Activated CD8-positive, alpha-beta T cell treated with anti-CD3 and anti-CD28 coated beads for 36 hours (primary cell): ENCODE measurements at regions of chr14 and their contacts with region 1.

Region 1: DNA sequence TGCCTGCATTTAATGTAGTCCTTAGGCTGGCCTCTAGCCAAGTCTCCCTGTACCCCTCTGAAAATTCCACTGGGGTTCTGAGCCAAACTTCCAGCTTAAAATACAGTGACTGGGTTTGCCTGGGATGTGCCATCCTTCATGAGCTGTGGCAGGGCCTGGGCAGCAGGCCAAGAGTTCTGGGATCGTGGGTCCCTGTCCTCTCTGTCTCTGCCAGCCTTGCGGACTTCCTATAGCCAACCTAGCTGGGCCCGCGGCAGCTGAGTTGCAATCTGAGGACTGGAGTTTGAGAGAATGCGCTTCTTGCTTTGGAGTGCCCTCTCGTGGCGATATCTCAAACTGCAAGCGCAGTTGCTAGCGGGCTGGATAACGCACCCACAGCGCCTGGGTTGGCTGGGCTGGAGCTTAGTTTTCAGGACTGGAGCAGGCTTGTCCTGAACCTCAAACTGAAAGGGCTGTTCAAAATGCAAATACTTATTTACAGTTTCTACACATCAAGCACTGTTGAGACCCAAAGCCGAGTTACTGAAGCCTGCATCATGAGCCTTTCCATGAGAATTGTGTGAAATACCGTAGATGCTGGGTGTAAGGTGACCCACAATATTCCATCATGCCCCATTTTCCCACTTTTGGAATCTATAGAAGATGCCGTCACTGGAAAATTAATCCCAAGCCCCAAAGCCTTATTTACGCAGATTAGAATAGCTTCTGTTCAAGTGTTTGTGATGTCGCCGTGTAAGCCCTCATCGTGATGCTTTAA is 7.3 kb upstream of the IFI27L2 start:
- DNase-seq: peak; percentile 93
- ATAC-seq: peak; percentile 96
- H3K4me3 Mint-ChIP-seq: no peak overlapping the region
- H3K27ac Mint-ChIP-seq: no peak overlapping the region
- H3K4me1 Mint-ChIP-seq: peaks cover 2% of the 10 kb centered on the region
- H3K27me3 Mint-ChIP-seq: peaks cover 15% of the 10 kb centered on the region
- CTCF ChIP-seq: peak; percentile 95

Region 2: DNA sequence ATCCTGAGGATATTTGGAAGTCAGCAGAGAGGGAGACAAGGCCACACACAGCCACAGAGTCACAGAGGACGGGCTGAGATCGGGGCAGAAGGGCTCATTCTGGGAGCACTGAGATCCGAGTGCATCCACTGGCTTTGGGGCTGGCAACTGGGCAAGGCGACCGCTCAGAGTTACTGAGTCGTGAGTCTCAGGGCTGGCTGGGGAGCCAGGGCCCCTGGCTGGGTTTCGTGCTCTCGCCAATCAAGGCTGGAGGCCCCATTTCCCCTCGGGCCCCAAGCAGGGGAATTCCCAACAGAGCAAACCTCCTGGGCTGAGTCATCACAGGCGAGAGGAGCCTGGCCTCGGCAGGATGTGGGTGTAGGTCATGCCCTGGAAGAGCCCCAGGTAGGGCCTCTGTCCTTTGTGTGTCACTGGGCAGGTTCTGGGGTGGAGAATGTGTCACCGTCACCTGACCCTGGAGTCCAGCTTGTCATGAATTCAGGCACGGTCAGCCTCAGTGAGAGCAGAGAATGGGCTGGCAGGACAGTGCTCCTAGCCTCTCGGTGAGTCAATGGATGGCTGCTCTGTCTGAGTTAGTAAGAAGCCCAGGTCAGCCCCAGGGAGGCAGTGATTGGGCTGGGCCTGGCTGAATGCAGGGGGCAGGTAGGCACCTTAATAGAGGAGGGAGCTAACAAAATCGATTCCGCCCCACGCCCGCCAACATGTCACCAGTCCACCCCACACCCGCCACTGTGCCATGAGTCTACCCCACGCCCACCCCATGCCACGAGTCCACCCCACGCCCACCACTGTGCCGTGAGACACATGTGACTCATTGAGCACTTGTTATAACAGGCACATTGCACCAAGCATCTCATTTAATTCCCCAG is 177.3 kb before region 1 on chr14:
- CTCF ChIA-PET with region 1: interaction called, 4 read pairs
- POLR2A ChIA-PET with region 1: no interaction called
- intact Hi-C with region 1: loop called (anchors 10 kb)
- DNase-seq: peak; percentile 98
- ATAC-seq: peak; percentile 69
- H3K4me3 Mint-ChIP-seq: peak overlapping the region; percentile 66
- H3K27ac Mint-ChIP-seq: peak overlapping the region; percentile 99
- H3K4me1 Mint-ChIP-seq: peaks cover 93% of the 10 kb centered on the region
- H3K27me3 Mint-ChIP-seq: no peaks in the 10 kb centered on the region
- CTCF ChIP-seq: no peak

Region 3: DNA sequence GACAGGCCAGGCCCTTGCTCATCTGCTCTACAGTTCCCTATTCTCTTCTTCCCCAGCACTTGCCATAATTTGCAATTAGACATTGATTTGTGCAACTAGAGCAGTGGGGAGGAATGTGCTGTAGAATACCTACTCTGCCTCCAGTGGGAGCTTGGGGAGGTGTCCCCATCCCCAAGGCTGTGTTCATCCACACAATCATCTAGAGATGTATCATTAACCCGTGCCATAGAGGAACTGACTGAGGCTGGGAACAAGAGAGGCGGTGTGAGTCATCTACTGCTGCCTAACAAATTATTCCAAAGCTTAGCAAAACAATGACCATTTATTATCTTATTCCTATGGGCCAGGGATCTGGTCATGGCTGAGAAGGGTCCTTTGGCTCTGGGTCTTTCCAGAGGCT is 115.8 kb before region 1 on chr14:
- CTCF ChIA-PET with region 1: interaction called, 16 read pairs
- POLR2A ChIA-PET with region 1: no interaction called
- intact Hi-C with region 1: no loop called
- DNase-seq: no peak
- ATAC-seq: no peak
- H3K4me3 Mint-ChIP-seq: no peak overlapping the region
- H3K27ac Mint-ChIP-seq: no peak overlapping the region
- H3K4me1 Mint-ChIP-seq: peaks cover 32% of the 10 kb centered on the region
- H3K27me3 Mint-ChIP-seq: peaks cover 3% of the 10 kb centered on the region
- CTCF ChIP-seq: no peak

Region 4: GRCh38 chr14:94036313-94037050 is 100.3 kb before region 1 on chr14:
- CTCF ChIA-PET with region 1: interaction called, 115 read pairs
- POLR2A ChIA-PET with region 1: no interaction called
- intact Hi-C with region 1: loop called (anchors 1 kb)
- DNase-seq: peak; percentile 90
- ATAC-seq: peak; percentile 100
- H3K4me3 Mint-ChIP-seq: no peak overlapping the region
- H3K27ac Mint-ChIP-seq: no peak overlapping the region
- H3K4me1 Mint-ChIP-seq: peaks cover 4% of the 10 kb centered on the region
- H3K27me3 Mint-ChIP-seq: no peaks in the 10 kb centered on the region
- CTCF ChIP-seq: peak; percentile 77

Region 5: DNA sequence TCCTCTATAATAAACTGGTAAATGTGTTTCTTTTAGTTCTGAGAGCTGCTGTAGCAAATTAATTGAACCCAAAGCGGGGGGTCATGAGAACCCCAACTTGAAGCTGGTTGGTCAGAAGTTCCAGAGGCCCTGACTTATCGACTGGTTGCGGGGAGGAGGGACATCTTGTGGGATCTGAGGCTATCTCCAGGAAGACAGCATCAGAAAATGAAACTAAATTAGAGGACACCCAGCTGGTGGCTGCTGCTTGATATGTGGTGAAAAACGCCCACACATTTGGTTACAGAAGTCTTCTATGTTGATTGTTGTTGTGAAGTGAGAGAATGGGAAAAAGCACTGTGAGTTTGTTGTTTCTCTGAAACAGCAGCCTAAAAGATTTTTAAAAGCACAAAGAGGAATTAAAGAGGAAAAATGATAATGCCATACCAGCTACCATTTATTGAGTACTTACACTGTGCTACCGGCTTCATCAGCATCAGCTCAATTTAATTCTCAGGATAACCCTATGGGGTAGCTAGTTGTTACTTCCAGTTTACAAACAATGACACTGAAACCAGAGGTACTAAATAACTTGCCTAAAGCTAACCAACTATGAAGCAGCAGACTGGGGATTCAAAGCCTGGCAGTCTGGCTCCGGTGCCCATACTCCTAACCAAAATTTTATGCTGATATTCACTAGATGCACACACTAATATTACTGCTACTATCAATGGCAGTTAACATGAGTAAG is 80.0 kb before region 1 on chr14:
- CTCF ChIA-PET with region 1: interaction called, 25 read pairs
- POLR2A ChIA-PET with region 1: no interaction called
- intact Hi-C with region 1: no loop called
- DNase-seq: peak; percentile 74
- ATAC-seq: peak; percentile 80
- H3K4me3 Mint-ChIP-seq: no peak overlapping the region
- H3K27ac Mint-ChIP-seq: peak overlapping the region; percentile 80
- H3K4me1 Mint-ChIP-seq: peaks cover 54% of the 10 kb centered on the region
- H3K27me3 Mint-ChIP-seq: no peaks in the 10 kb centered on the region
- CTCF ChIP-seq: no peak

Region 6: GRCh38 chr14:94117856-94118255 is 18.9 kb before region 1 on chr14:
- CTCF ChIA-PET with region 1: interaction called, 12 read pairs
- POLR2A ChIA-PET with region 1: no interaction called
- intact Hi-C with region 1: no loop called
- DNase-seq: no peak
- ATAC-seq: no peak
- H3K4me3 Mint-ChIP-seq: no peak overlapping the region
- H3K27ac Mint-ChIP-seq: no peak overlapping the region
- H3K4me1 Mint-ChIP-seq: no peaks in the 10 kb centered on the region
- H3K27me3 Mint-ChIP-seq: no peaks in the 10 kb centered on the region
- CTCF ChIP-seq: no peak

Region 7: GRCh38 chr14:94173885-94174603 is 37.3 kb after region 1 on chr14 and contains the start of gene PPP4R4:
- CTCF ChIA-PET with region 1: interaction called, 92 read pairs
- POLR2A ChIA-PET with region 1: interaction called, 4 read pairs
- intact Hi-C with region 1: no loop called
- DNase-seq: peak; percentile 89
- ATAC-seq: peak; percentile 96
- H3K4me3 Mint-ChIP-seq: peak within 1 kb of the TSS; percentile 71
- H3K27ac Mint-ChIP-seq: no peak within 1 kb of the TSS
- H3K4me1 Mint-ChIP-seq: peaks cover 18% of the 10 kb centered on the region
- H3K27me3 Mint-ChIP-seq: peaks cover 31% of the 10 kb centered on the region
- CTCF ChIP-seq: no peak
- total RNA-seq, gene PPP4R4: 0.63 to 1.2 TPM

Region 8: DNA sequence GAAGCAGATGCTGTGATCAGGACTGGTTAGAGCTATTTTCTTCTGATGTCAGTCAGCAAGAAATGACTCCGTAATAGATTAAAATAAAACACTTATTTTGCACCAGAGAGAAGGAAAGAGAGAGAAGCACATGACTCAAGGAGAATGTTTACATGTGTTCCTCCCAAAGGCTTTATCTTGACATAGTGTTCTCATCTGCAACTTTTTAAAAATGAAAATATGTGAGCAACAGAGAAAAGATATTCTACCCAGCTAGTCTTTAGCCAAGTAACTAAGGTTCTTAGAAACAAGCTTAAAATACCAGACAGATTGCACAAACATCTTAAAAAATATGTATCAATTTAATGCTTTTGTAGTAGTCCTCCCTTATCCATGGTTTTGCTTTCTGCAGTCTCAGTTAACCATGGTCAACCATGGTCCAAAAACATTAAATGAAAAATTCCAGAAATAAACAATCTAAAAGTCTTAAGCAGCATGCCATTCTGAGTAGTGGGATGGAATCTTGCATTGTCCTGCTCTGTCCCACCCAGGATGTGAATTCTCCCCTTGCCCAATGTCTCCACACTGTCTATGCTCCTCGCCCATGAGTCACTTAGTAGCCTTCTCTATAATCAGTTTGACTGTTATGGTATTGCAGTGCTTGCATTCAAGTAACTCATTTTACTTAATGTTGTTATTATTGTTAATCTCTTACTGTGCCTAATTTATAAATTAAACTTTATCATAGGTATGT is 146.4 kb after region 1 on chr14:
- CTCF ChIA-PET with region 1: no interaction called
- POLR2A ChIA-PET with region 1: no interaction called
- intact Hi-C with region 1: no loop called
- DNase-seq: no peak
- ATAC-seq: no peak
- H3K4me3 Mint-ChIP-seq: no peak overlapping the region
- H3K27ac Mint-ChIP-seq: no peak overlapping the region
- H3K4me1 Mint-ChIP-seq: no peaks in the 10 kb centered on the region
- H3K27me3 Mint-ChIP-seq: peaks cover 15% of the 10 kb centered on the region
- CTCF ChIP-seq: no peak

Region 9: GRCh38 chr14:94298130-94298529 is 161.4 kb after region 1 on chr14:
- CTCF ChIA-PET with region 1: no interaction called
- POLR2A ChIA-PET with region 1: no interaction called
- intact Hi-C with region 1: no loop called
- DNase-seq: no peak
- ATAC-seq: no peak
- H3K4me3 Mint-ChIP-seq: no peak overlapping the region
- H3K27ac Mint-ChIP-seq: no peak overlapping the region
- H3K4me1 Mint-ChIP-seq: no peaks in the 10 kb centered on the region
- H3K27me3 Mint-ChIP-seq: peaks cover 5% of the 10 kb centered on the region
- CTCF ChIP-seq: no peak

Region 10: DNA sequence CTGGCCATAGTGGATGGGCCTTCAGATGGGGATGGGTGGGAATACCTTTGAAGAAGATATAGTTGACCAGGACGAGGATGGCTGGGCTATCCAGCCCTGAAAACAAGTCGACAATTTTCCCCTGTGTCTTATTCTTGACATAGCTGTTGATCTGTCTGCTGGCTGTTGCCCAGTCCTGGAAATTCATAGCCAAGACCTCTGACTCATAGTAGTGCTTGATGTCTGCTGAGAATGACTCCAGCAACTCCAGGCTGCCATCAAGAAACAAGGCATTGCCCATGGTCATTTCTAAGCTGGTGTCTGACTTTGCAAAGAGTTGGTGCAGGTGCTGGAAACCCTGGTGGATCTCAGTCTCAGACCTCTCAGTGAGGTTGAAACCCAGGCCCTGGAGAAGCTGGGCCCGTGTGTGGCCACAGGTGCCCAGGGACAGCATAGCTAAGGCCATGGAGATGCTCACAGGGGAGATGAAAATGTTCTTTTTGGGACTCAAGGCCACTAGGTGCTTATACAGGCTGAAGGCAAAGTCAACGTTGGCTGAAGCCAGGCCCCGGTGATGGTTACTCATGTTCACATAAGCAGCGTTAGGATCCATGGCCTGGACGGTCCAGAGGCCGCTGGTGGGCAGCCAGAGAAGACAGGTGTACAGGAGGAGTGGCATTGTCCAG is 177.4 kb after region 1 on chr14:
- CTCF ChIA-PET with region 1: no interaction called
- POLR2A ChIA-PET with region 1: no interaction called
- intact Hi-C with region 1: no loop called
- DNase-seq: no peak
- ATAC-seq: no peak
- H3K4me3 Mint-ChIP-seq: no peak overlapping the region
- H3K27ac Mint-ChIP-seq: no peak overlapping the region
- H3K4me1 Mint-ChIP-seq: no peaks in the 10 kb centered on the region
- H3K27me3 Mint-ChIP-seq: peaks cover 1% of the 10 kb centered on the region
- CTCF ChIP-seq: no peak

Region 11: DNA sequence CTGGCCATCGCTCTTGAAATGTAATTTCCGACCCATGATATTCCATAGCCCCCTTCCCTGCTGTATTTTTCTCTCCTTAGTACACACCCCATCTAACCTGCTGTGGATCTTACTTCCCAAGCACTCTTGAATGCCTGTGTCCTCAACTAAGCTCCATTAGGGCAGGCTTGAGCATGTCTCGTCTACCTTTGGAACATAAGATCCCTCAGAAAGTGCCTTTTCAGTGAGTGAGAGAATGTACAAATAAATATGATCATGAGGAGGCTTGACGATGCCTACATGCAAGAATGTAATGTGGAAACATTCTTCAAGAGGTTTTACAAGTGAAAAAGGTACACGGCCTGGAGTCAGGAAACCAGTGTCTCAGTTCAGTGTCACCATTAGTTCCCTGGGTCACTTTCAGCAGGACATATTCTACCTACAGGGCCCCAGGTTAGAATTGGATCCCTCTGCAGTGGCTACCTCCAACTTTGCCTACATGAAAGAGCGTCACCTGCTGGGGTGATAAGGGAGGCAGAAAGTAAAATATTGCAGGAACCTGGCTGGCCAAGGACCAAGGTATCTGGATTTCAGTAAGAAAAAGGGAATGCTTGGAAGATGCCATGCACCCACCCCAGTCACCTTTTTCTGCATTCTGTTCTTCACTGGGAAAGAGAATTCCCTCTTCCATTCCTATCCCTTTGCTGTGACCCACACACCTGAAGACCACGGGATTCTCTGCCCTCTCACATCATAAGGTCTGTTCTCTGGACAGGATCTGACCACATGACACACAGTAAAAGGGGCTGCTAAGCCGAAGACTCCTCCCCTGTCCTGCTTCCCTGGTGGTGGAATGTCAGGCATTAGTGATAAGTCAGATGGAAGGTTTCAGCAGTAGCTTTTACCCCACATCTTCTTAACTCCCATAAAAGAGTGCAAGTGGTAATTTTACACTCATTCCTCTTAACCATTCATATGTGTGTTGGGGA is 276.2 kb after region 1 on chr14:
- CTCF ChIA-PET with region 1: no interaction called
- POLR2A ChIA-PET with region 1: no interaction called
- intact Hi-C with region 1: no loop called
- DNase-seq: no peak
- ATAC-seq: no peak
- H3K4me3 Mint-ChIP-seq: no peak overlapping the region
- H3K27ac Mint-ChIP-seq: no peak overlapping the region
- H3K4me1 Mint-ChIP-seq: no peaks in the 10 kb centered on the region
- H3K27me3 Mint-ChIP-seq: peaks cover 10% of the 10 kb centered on the region
- CTCF ChIP-seq: no peak